SK-N-SH (cell line): ENCODE measurements at regions of chr12 and their contacts with region 1.

Region 1: GRCh38 chr12:32312049-32312670 is 87.2 kb upstream of the FGD4 start:
- DNase-seq: peak; percentile 44
- H3K4me3 ChIP-seq: no peak overlapping the region
- H3K27ac ChIP-seq: peak overlapping the region in 1 of 2 experiments; percentile 28; a peak in 2 of 4 replicates
- H3K4me1 ChIP-seq: peaks cover 4 to 9% of the 10 kb centered on the region in 2 experiments; a peak in 3 of 4 replicates
- H3K27me3 ChIP-seq: no peaks in the 10 kb centered on the region
- CTCF ChIP-seq: peak; percentile 72
- EP300 ChIP-seq: no peak
- RAD21 ChIP-seq: peak; percentile 69

Region 2: GRCh38 chr12:31647086-31647491 is 665.1 kb before region 1 on chr12:
- CTCF ChIA-PET with region 1: interaction called, 32 read pairs
- POLR2A ChIA-PET with region 1: no interaction called
- DNase-seq: peak; percentile 17
- H3K4me3 ChIP-seq: no peak overlapping the region
- H3K27ac ChIP-seq: peak overlapping the region in 1 of 2 experiments; percentile 68; a peak in 2 of 4 replicates
- H3K4me1 ChIP-seq: peaks cover 0 to 15% of the 10 kb centered on the region in 2 experiments; a peak in 2 of 4 replicates
- H3K27me3 ChIP-seq: no peaks in the 10 kb centered on the region
- CTCF ChIP-seq: no peak
- EP300 ChIP-seq: no peak
- RAD21 ChIP-seq: no peak

Region 3: DNA sequence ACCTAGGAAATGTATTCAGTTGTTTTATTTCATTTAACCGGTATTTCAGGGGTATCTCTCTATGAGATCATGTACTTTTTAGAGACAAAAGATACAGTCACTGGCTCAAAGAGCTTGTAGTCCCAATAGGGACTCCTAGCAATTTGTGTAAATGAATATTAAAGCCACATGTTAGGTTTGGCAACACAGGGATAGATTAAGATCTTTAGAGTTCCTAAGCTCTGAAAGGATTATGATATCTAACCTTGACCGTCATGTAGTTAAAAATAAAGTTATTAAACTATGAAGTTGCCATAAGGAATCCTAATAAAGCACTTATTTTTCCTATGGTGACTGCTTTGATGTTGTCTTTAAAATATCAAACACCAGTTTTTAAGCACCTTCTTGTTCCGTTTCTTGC is 13.2 kb before region 1 on chr12:
- CTCF ChIA-PET with region 1: interaction called, 11 read pairs
- POLR2A ChIA-PET with region 1: no interaction called
- DNase-seq: peak; percentile 26
- H3K4me3 ChIP-seq: no peak overlapping the region
- H3K27ac ChIP-seq: peak overlapping the region; percentile 43 to 71; a peak in 3 of 4 replicates
- H3K4me1 ChIP-seq: peaks cover 4 to 5% of the 10 kb centered on the region in 2 experiments
- H3K27me3 ChIP-seq: no peaks in the 10 kb centered on the region
- CTCF ChIP-seq: no peak
- EP300 ChIP-seq: peak; percentile 25 to 55; a peak in 1 of 4 replicates
- RAD21 ChIP-seq: 0 out of 2 replicates have a peak, but pooled peaks have one; percentile 2

Region 4: GRCh38 chr12:32322354-32322753 is 10.2 kb after region 1 on chr12:
- CTCF ChIA-PET with region 1: interaction called, 21 read pairs
- POLR2A ChIA-PET with region 1: no interaction called
- DNase-seq: no peak
- H3K4me3 ChIP-seq: no peak overlapping the region
- H3K27ac ChIP-seq: no peak overlapping the region
- H3K4me1 ChIP-seq: peaks cover 0 to 4% of the 10 kb centered on the region in 2 experiments; a peak in 1 of 4 replicates
- H3K27me3 ChIP-seq: no peaks in the 10 kb centered on the region
- CTCF ChIP-seq: no peak
- EP300 ChIP-seq: no peak
- RAD21 ChIP-seq: no peak